ENCODE measurements at regions of chr9 and their contacts with region 1.

Region 1: GRCh38 chr9:129726322-129727160 is 26.3 kb downstream of the PTGES start:
- DNase-seq: peak; percentile 73
- ATAC-seq: peak; percentile 99
- H3K4me3 Mint-ChIP-seq: peak overlapping the region; percentile 37
- H3K27ac Mint-ChIP-seq: no peak overlapping the region
- H3K4me1 Mint-ChIP-seq: peaks cover 2% of the 10 kb centered on the region
- H3K27me3 Mint-ChIP-seq: peaks cover 4% of the 10 kb centered on the region
- CTCF ChIP-seq: peak; percentile 98

Region 2: DNA sequence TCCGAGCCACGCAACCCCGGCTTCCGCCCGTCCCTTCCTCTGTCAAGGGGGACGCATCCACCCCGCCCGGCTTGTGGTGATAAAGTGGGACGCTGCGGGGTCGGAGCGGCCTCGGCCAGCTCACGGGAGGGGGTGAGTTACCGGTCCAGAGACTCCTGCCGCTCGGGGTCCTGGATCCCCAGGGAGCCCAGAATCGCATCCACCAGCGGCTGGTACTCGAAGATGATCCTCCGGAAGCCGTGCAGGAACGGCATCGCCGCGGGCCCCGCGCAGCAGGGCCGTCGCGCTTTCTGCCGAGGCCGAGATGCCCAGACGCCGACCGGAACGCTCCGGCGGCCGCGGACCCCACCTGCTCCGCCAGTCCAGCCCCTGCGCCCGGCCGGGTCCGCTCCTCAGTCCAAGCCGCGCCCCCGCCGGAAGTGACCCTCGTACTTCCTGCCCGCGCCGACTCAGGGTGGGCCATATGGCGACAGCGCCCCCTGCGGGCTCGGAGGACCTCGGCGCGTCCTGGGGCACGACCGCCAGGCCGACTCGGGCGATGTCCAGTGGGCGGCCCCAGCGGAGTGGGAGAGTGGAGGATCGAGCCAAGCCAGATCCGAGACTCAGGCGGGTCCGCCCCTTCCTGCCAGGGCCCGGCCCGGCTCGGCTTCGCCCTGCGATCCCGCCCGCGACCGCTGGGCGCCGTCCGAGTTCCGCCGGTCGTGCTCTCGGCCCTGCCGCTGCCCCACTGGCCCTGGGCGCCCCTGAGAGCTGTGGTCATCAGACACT is 84.6 kb before region 1 on chr9 and contains the start of gene ASB6:
- CTCF ChIA-PET with region 1: interaction called, 11 read pairs
- POLR2A ChIA-PET with region 1: no interaction called
- intact Hi-C with region 1: loop called (anchors 5 kb)
- DNase-seq: peak; percentile 97
- ATAC-seq: peak; percentile 98
- H3K4me3 Mint-ChIP-seq: peak within 1 kb of the TSS; percentile 89
- H3K27ac Mint-ChIP-seq: peak within 1 kb of the TSS; percentile 82
- H3K4me1 Mint-ChIP-seq: peaks cover 16% of the 10 kb centered on the region
- H3K27me3 Mint-ChIP-seq: no peaks in the 10 kb centered on the region
- CTCF ChIP-seq: peak; percentile 100
- total RNA-seq, gene ASB6: 16.6 TPM

Region 3: GRCh38 chr9:129696938-129697650 is 29.4 kb before region 1 on chr9:
- CTCF ChIA-PET with region 1: interaction called, 17 read pairs
- POLR2A ChIA-PET with region 1: no interaction called
- intact Hi-C with region 1: no loop called
- DNase-seq: peak; percentile 36
- ATAC-seq: peak; percentile 66
- H3K4me3 Mint-ChIP-seq: peak overlapping the region; percentile 49
- H3K27ac Mint-ChIP-seq: peak overlapping the region; percentile 81
- H3K4me1 Mint-ChIP-seq: peaks cover 5% of the 10 kb centered on the region
- H3K27me3 Mint-ChIP-seq: peaks cover 31% of the 10 kb centered on the region
- CTCF ChIP-seq: no peak

Region 4: GRCh38 chr9:129712634-129713401 is 13.7 kb before region 1 on chr9:
- CTCF ChIA-PET with region 1: interaction called, 27 read pairs
- POLR2A ChIA-PET with region 1: interaction called, 3 read pairs
- intact Hi-C with region 1: no loop called
- DNase-seq: peak; percentile 49
- ATAC-seq: peak; percentile 56
- H3K4me3 Mint-ChIP-seq: no peak overlapping the region
- H3K27ac Mint-ChIP-seq: no peak overlapping the region
- H3K4me1 Mint-ChIP-seq: peaks cover 20% of the 10 kb centered on the region
- H3K27me3 Mint-ChIP-seq: peaks cover 6% of the 10 kb centered on the region
- CTCF ChIP-seq: no peak

Region 5: GRCh38 chr9:129746092-129746777 is 19.7 kb after region 1 on chr9:
- CTCF ChIA-PET with region 1: interaction called, 23 read pairs
- POLR2A ChIA-PET with region 1: no interaction called
- intact Hi-C with region 1: no loop called
- DNase-seq: no peak
- ATAC-seq: no peak
- H3K4me3 Mint-ChIP-seq: no peak overlapping the region
- H3K27ac Mint-ChIP-seq: no peak overlapping the region
- H3K4me1 Mint-ChIP-seq: peaks cover 2% of the 10 kb centered on the region
- H3K27me3 Mint-ChIP-seq: no peaks in the 10 kb centered on the region
- CTCF ChIP-seq: no peak

Region 6: GRCh38 chr9:129759804-129760502 is 33.4 kb after region 1 on chr9:
- CTCF ChIA-PET with region 1: interaction called, 13 read pairs
- POLR2A ChIA-PET with region 1: interaction called, 5 read pairs
- intact Hi-C with region 1: no loop called
- DNase-seq: no peak
- ATAC-seq: no peak
- H3K4me3 Mint-ChIP-seq: no peak overlapping the region
- H3K27ac Mint-ChIP-seq: no peak overlapping the region
- H3K4me1 Mint-ChIP-seq: peaks cover 9% of the 10 kb centered on the region
- H3K27me3 Mint-ChIP-seq: peaks cover 2% of the 10 kb centered on the region
- CTCF ChIP-seq: no peak

Region 7: DNA sequence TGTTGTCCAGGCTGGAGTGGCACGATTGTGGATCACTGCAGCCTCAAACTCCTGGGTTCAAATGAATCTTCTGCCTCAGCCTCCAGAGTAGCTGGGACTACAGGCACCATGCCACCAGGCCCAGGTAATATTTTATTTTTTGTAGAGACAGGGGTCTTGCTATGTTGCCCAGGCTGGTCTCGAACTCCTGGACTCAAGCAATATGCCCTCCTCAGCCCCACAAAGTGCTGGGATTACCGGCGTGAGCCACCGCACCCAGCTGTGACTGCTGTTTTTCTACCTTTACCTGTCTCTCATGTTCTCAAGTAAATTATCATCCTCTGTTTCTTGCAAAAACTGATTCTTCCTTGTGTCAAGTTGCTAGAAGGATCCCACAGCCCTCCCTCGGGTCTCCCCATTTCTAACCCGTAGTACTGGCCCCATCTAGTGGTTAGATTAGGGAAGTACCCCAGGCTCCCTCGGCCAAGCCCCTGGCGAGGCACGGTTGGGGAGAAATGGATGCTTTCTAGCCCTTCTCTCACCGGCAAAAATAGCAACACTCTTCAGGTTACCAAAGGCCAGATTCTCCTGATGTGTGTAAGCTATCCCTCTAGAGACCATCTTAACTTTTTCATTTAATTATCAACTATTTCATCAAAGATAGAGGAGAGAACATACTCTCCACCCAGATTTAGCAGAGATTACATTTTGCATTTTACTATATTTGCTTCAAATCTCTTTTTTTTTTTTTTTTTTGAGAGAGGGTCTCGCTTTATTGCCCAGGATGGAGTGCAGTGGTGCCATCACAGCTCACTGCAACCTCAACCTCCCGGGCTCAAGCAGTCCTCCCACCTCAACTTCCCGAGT is 57.2 kb after region 1 on chr9:
- CTCF ChIA-PET with region 1: interaction called, 68 read pairs
- POLR2A ChIA-PET with region 1: no interaction called
- intact Hi-C with region 1: no loop called
- DNase-seq: peak; percentile 79
- ATAC-seq: peak; percentile 99
- H3K4me3 Mint-ChIP-seq: no peak overlapping the region
- H3K27ac Mint-ChIP-seq: no peak overlapping the region
- H3K4me1 Mint-ChIP-seq: peaks cover 2% of the 10 kb centered on the region
- H3K27me3 Mint-ChIP-seq: no peaks in the 10 kb centered on the region
- CTCF ChIP-seq: peak; percentile 92

Region 8: GRCh38 chr9:129835021-129835871 is 108.7 kb after region 1 on chr9 and contains the starts of genes C9orf78 and USP20:
- CTCF ChIA-PET with region 1: no interaction called
- POLR2A ChIA-PET with region 1: no interaction called
- intact Hi-C with region 1: no loop called
- DNase-seq: peak; percentile 97
- ATAC-seq: peak; percentile 94
- H3K4me3 Mint-ChIP-seq: peak within 1 kb of the TSS; percentile 85
- H3K27ac Mint-ChIP-seq: peak within 1 kb of the TSS; percentile 95
- H3K4me1 Mint-ChIP-seq: peaks cover 54% of the 10 kb centered on the region
- H3K27me3 Mint-ChIP-seq: no peaks in the 10 kb centered on the region
- CTCF ChIP-seq: no peak
- total RNA-seq, gene C9orf78: 44.5 to 51.7 TPM
- total RNA-seq, gene USP20: 55.3 to 55.9 TPM

Region 9: GRCh38 chr9:129938291-129938979 is 211.9 kb after region 1 on chr9:
- CTCF ChIA-PET with region 1: no interaction called
- POLR2A ChIA-PET with region 1: no interaction called
- intact Hi-C with region 1: no loop called
- DNase-seq: no peak
- ATAC-seq: no peak
- H3K4me3 Mint-ChIP-seq: no peak overlapping the region
- H3K27ac Mint-ChIP-seq: peak overlapping the region; percentile 80
- H3K4me1 Mint-ChIP-seq: peaks cover 63% of the 10 kb centered on the region
- H3K27me3 Mint-ChIP-seq: no peaks in the 10 kb centered on the region
- CTCF ChIP-seq: no peak

Measured in activated CD8-positive, alpha-beta T cell treated with anti-CD3 and anti-CD28 coated beads for 36 hours (primary cell).